ENCODE measurements at regions of chr6 and their contacts with region 1.

Region 1: DNA sequence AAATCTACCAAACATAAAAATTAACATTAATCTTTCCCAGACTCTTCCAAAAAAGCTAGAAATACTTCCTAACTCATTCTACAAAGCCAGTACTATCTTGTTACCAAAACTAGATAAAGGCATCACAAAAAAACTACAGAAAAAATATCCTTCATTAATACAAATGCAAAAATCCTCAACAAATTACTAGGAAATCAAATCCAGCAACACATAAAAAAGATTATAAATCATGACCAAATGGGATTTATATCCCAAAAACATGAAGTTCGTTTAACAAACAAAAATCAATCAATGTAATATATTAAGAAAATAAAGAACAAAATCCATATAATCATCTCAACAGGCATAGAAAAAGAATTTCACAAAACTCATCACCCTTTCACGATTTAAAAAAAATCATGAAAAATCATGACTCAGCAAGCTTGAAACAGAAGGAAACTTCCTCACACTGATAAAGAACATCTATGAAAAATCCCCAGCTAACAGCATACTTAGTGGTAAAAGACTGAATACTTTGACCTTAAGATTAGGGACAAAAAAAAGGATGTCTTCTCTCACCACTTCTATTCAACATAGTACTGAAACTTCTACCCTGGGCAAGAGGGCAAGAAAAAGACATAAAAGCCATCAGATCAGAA is 43.2 kb downstream of the RANBP9 start:
- DNase-seq: no peak
- H3K4me3 Mint-ChIP-seq: peak overlapping the region; percentile 30
- H3K27ac Mint-ChIP-seq: peak overlapping the region; percentile 70
- H3K4me1 Mint-ChIP-seq: peaks cover 77% of the 10 kb centered on the region
- H3K27me3 Mint-ChIP-seq: no peaks in the 10 kb centered on the region

Region 2: GRCh38 chr6:13614926-13615798 is 53.2 kb before region 1 on chr6 and contains the start of gene NOL7:
- intact Hi-C with region 1: no loop called
- DNase-seq: peak; percentile 97
- H3K4me3 Mint-ChIP-seq: peak within 1 kb of the TSS; percentile 98
- H3K27ac Mint-ChIP-seq: peak within 1 kb of the TSS; percentile 93
- H3K4me1 Mint-ChIP-seq: peaks cover 31% of the 10 kb centered on the region
- H3K27me3 Mint-ChIP-seq: no peaks in the 10 kb centered on the region
- total RNA-seq, gene NOL7: 82.5 and 84.1 TPM in 2 replicates

Region 3: DNA sequence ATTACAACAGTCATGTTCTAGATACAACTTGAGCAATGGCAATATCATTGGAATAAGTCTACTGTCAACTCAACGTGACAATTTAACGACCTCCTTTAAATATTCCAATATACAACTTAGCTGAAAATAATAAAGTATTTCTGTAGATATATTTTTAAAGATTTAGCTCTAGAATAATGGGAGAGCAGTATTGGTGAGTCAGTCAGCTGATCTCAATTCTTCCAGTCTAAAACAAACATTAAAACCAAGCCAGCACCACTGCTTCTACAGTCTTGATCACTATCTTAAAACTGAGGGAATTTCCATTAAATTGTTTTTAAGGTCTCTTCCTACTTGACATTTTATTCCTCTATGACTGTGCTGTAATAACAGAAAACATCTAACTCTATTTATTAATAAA is 15.1 kb before region 1 on chr6:
- intact Hi-C with region 1: loop called (anchors 2 kb)
- DNase-seq: no peak
- H3K4me3 Mint-ChIP-seq: no peak overlapping the region
- H3K27ac Mint-ChIP-seq: no peak overlapping the region
- H3K4me1 Mint-ChIP-seq: peaks cover 28% of the 10 kb centered on the region
- H3K27me3 Mint-ChIP-seq: no peaks in the 10 kb centered on the region

Region 4: GRCh38 chr6:13681305-13682061 is 13.1 kb after region 1 on chr6:
- intact Hi-C with region 1: loop called (anchors 1 kb)
- DNase-seq: no peak
- H3K4me3 Mint-ChIP-seq: peak overlapping the region; percentile 61
- H3K27ac Mint-ChIP-seq: peak overlapping the region; percentile 82
- H3K4me1 Mint-ChIP-seq: peaks cover 38% of the 10 kb centered on the region
- H3K27me3 Mint-ChIP-seq: no peaks in the 10 kb centered on the region

Region 5: DNA sequence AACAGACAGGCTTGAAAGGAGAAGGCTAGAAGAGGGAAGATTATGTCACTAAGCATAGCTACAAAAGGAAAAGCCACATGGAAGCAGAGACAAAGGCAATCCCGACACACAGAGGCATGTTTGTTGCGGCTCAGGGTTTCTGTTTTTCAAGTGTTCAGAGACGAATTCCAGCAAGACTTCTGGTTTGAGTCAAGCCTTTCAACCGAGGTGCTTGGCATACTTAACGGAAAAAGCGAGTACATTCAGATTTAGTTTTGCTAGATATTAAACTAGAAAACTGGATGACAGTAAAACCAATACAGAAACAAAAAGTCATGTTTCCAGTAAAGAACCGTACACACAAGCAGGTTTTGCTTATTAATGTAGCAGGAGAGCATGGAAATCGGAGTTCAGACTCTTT is 118.7 kb after region 1 on chr6:
- intact Hi-C with region 1: loop called (anchors 5 kb)
- DNase-seq: no peak
- H3K4me3 Mint-ChIP-seq: peak overlapping the region; percentile 26
- H3K27ac Mint-ChIP-seq: peak overlapping the region; percentile 81
- H3K4me1 Mint-ChIP-seq: peaks cover 34% of the 10 kb centered on the region
- H3K27me3 Mint-ChIP-seq: no peaks in the 10 kb centered on the region

Region 6: DNA sequence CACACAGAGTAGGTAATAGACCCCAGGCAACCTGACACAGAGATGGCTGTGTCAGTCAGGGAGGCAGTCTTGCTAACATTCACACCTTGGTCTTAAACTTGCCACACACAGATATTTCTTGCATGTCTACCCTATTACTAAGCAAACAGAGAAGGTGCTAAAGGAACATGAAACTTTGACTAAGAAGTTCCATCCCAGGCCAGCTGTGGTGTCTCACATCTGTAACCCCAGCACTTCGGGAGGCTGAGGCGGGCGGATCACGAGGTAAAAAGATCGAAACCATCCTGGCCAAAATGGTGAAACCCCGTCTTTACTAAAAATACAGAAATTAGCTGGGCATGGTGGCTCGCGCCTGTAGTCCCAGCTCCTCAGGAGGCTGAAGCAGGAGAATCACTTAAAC is 1355.0 kb after region 1 on chr6:
- intact Hi-C with region 1: no loop called
- DNase-seq: peak; percentile 28
- H3K4me3 Mint-ChIP-seq: no peak overlapping the region
- H3K27ac Mint-ChIP-seq: peak overlapping the region; percentile 91
- H3K4me1 Mint-ChIP-seq: peaks cover 37% of the 10 kb centered on the region
- H3K27me3 Mint-ChIP-seq: no peaks in the 10 kb centered on the region

Measured in activated T-helper 2 cell treated with anti-CD3 and anti-CD28 coated beads, Interferon-gamma antibody, Interleukin-2, Interleukin-4, amounts not matched to agents 10 μg/mL and 5 μg/mL and 100 μg/mL, durations not matched to agents 14 hours and 24 hours and 36 hours (primary cell).